AG04450 (cell line): ENCODE measurements at regions of chr12 and their contacts with region 1.

Region 1: DNA sequence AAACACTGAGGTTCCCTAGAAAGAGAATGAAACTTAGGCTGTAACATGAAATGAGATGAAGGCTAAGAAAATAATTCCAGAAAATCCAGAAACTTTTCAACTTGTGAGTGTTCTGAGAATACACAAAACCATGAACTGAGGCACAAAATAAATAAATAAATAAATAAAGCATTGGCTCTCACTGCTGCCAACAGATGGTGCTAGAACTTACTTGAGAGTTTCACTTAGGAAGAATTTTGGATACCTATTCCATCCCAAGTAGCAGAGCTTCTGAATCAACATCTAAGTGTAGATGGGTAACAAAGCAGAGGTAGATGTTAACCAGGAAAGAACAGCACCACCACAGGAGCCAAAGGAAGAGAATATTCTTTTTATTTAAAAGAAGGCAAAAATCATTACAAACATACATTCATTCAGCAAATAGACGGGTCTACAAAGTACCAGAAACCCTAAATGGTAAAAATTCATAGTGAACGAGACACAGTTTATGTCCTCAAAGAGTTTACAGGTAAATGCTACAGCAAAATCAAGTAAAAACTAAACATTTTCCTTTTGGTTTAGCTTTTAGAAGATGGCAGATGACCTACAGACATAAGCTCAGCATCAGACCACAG is 16.7 kb downstream of the EPS8 start:
- DNase-seq: no peak
- H3K4me3 ChIP-seq: no peak overlapping the region
- H3K27ac ChIP-seq: no peak overlapping the region
- H3K27me3 ChIP-seq: no peaks in the 10 kb centered on the region
- CTCF ChIP-seq: peak; percentile 25; the same call in 1 of the 2 replicates

Region 2: DNA sequence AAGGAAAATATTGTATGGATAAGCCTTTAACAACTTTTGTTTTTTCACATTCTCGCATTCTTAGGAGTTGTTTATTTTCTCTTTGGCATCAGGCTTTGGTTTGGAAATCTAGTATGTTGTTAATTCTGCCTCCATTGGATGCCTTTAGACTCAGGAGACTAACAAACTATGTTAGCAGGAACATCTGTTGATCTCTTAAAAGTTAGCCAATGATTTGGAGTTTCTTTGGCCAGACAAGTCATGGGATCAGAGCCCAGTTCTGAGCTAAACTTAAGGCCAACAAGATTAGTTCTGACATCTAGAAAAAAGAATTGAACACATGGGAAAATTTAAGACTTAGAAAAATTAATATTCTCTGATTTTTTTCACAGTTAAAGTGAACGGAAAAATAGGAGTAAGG is 74.4 kb after region 1 on chr12:
- CTCF ChIA-PET with region 1: interaction called, 13 read pairs
- POLR2A ChIA-PET with region 1: no interaction called
- DNase-seq: no peak
- H3K4me3 ChIP-seq: no peak overlapping the region
- H3K27ac ChIP-seq: no peak overlapping the region
- H3K27me3 ChIP-seq: no peaks in the 10 kb centered on the region
- CTCF ChIP-seq: no peak